PC-3 (cell line): ENCODE measurements at regions of chr5 and their contacts with region 1.

Region 1: DNA sequence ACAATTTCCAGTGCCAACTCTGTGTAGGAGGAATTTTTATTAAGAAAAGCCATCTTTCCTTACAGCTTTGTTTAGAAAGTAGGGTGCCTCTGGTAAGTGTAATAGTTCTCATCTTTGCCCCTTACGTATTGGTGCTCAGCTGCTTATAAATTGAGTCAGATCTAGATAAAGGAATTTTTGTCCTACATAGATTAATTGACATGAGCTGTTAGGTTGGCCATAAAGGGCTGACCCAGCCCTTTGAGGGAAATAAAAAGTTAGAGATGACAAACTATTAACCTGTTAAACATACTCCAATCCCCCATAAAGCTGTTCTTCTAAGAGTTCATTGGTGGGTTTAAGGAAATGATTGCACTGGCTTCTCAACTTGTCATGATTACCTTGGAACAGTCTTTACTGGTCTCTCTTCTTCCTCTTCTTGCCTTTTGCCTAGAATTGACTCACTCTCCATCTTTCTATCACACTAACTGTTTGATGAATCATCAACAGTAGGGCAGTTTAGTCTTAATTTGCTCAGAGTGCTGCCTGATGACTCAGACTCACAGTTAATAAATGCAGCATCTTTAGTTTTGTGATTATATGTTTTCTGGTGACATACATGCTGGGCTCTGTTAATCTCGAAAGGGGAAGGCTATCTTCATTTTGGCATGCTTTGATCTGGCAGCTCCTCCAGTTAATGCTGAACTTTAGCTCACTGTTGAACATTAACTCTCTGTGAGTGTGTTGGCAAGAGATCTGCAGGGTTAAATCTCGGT is 51.7 kb downstream of the ARHGAP26 start:
- DNase-seq: peak; percentile 91
- ATAC-seq: peak; percentile 71
- H3K4me3 ChIP-seq: peak overlapping the region; percentile 34; the same call in 1 of the 2 replicates
- H3K27ac ChIP-seq: peak overlapping the region; percentile 97
- H3K4me1 ChIP-seq: peaks cover 98% of the 10 kb centered on the region
- H3K27me3 ChIP-seq: no peaks in the 10 kb centered on the region
- CTCF ChIP-seq: no peak

Region 2: DNA sequence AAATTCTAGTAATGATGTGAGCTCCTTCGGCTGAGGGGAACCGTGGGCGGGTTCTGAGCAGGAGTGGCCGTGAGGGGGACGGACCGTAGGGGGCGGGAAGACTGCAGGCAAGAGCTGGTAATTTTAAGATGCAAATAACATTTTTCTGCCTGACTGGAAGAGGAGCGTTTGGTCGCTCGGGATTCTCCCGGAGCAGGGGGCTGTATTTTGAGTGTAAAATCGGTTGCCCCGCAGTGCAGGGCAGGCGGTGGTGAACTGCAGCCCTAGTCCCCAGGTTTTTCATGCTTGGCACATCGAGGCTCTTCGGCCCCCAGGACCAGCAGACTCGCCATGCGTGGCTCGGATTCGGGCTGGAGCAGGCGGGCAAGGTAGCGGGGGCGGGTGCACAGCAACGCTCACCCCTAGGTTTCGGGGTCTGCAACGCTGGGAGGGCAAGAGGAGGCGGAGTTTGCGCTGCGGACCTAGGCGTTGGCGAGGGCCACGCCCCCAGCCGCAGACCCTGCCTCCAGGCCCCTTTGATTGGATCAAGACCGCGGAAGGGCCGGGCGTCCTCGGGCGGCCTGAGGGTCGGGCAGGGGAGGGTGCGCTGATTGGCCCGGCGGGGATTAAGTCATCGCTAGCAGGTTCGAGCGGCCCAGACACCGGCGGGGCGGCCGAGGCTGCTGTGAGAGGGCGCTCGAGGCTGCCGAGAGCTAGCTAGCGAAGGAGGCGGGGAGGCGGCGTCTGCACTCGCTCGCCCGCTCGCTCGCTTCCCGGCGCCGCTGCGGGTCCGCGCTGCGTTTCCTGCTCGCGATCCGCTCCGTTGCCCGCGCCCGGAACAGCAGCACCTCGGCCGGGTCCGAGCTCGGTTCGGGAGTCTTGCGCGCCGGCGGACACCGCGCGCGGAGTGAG is 51.9 kb before region 1 on chr5 and contains the start of gene ARHGAP26:
- CTCF ChIA-PET with region 1: no interaction called
- POLR2A ChIA-PET with region 1: interaction called, 4 read pairs
- intact Hi-C with region 1: loop called (anchors 5 kb)
- DNase-seq: peak; percentile 92
- ATAC-seq: peak; percentile 94
- H3K4me3 ChIP-seq: peak within 1 kb of the TSS; percentile 97
- H3K27ac ChIP-seq: peak within 1 kb of the TSS; percentile 29
- H3K4me1 ChIP-seq: peaks cover 19% of the 10 kb centered on the region
- H3K27me3 ChIP-seq: no peaks in the 10 kb centered on the region
- CTCF ChIP-seq: no peak
- total RNA-seq, gene ARHGAP26: 6.2 and 11.7 TPM in 2 replicates

Region 3: DNA sequence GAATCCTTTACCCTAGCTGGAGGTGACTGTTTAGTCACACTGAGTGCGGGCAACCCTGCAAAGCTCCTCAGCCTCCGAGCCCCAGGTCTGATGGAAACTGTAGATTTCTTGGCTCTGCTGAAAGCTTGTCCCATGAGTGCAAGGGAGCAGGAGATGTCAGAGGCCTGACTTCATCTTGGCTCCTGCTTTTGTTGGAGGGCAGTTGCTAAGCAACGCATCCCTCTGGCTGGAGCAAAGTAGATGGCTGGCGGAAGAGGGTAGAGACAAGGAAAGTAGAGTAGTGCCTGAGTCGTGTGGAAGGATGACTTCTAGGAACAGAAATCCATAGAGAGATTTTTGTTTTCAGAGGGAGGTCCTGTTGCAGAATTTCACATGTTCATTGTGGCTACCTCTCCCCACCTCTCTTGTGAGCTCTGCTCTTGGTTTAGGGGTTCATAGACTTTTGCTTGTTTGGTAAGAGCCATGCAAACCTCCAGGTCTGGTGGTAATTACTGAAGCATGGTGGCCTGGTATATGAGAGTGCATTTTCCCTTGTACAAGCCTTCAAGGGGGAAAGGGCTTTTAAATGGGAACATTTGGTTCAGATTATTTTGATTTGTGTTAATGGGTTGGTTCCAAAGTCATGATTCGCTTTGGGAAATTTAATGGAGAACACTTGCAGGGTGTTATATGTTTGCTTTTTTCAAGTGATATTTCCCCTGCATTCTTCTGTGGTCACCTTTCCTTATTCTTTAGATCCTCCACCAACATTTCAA is 19.8 kb after region 1 on chr5:
- CTCF ChIA-PET with region 1: no interaction called
- POLR2A ChIA-PET with region 1: interaction called, 4 read pairs
- intact Hi-C with region 1: loop called (anchors 2 kb)
- DNase-seq: no peak
- ATAC-seq: no peak
- H3K4me3 ChIP-seq: no peak overlapping the region
- H3K27ac ChIP-seq: no peak overlapping the region
- H3K4me1 ChIP-seq: peaks cover 45% of the 10 kb centered on the region
- H3K27me3 ChIP-seq: no peaks in the 10 kb centered on the region
- CTCF ChIP-seq: no peak

Region 4: DNA sequence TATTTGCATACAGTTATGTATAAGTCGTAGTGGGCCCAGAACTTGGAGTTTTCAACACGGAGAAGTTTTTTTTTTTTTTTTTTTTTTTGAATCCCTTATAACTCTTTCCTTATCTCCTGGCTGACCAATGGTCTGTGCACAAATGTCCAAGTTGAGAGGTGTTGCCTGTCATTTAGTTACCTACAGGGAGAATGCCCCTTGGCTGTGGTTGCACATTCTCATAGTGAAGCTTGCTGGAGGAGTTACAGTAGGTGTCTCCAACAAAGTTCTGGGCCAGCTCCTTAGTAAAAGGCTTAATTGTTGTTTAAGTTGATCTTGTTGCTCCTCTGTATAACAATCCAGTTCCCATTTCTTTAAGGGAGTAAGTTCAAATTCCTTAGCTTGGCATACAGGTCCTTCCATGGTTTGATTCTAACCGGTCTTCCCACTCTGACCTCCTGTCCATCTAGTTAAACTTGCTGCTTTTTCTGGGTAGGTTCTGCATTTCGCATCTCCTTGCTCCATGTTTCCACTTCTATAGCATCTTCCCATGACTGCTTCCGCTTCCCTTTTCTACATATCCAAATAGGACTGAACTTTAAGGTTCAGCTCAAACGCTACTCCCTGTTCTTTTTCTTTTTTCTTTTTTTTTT is 43.6 kb after region 1 on chr5:
- CTCF ChIA-PET with region 1: interaction called, 6 read pairs
- POLR2A ChIA-PET with region 1: no interaction called
- intact Hi-C with region 1: loop called (anchors 2 kb)
- DNase-seq: no peak
- ATAC-seq: no peak
- H3K4me3 ChIP-seq: no peak overlapping the region
- H3K27ac ChIP-seq: no peak overlapping the region
- H3K4me1 ChIP-seq: peaks cover 13% of the 10 kb centered on the region
- H3K27me3 ChIP-seq: no peaks in the 10 kb centered on the region
- CTCF ChIP-seq: no peak

Region 5: DNA sequence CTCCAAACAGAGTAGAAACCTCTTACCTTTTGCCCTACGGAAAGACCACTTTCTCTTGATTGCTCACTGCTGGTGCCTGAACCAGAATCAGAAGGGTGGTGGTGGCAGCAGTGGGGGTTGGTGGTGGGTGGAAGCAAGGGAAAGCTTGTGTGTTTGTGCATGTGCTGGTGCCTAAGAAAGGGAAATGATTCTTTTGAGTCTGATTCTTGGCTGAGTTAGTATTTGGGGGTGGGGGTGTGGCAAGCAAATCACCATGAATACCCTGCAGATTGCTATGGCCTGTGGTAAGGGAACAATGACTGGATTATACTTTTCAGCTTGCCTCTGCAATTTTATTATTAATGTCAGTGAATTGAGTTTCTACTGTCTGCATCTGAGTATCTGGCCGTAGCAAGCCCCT is 54.9 kb after region 1 on chr5:
- CTCF ChIA-PET with region 1: no interaction called
- POLR2A ChIA-PET with region 1: no interaction called
- intact Hi-C with region 1: no loop called
- DNase-seq: no peak
- ATAC-seq: no peak
- H3K4me3 ChIP-seq: no peak overlapping the region
- H3K27ac ChIP-seq: no peak overlapping the region
- H3K4me1 ChIP-seq: peaks cover 36% of the 10 kb centered on the region
- H3K27me3 ChIP-seq: no peaks in the 10 kb centered on the region
- CTCF ChIP-seq: no peak

Region 6: DNA sequence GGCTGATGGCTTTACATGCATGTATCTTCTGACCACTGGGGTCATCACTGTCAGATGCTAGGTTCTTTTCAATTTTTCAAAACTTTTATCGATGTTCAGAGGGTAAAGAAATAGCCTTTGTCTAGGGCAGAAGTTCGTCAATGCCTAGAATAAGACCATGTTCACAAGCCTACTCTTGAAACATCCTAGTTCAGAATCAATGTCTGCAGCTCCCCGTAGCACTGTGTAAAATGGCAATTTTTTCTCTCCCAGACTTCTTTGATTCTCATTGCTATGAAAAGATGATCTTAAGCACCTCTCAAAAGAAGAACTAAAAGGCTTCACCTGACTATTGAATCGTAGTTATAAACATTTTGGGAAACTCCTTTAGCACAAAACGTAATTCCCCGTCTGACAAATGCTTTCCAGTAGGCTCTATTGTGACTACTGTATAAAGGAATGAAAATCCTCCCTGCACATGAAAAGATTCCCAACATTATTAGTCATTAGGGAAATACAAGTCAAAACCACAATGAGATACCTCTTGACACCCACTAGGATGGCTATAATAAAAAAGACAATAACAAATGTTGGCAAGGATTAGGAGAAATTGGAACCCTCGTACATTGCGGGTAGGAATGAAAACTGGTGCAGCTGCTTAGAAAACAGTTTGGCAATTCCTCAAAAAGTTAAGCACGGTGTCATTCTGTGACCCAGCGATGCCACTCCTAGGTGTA is 211.8 kb after region 1 on chr5:
- CTCF ChIA-PET with region 1: no interaction called
- POLR2A ChIA-PET with region 1: no interaction called
- intact Hi-C with region 1: no loop called
- DNase-seq: peak; percentile 90
- ATAC-seq: peak; percentile 85
- H3K4me3 ChIP-seq: no peak overlapping the region
- H3K27ac ChIP-seq: peak overlapping the region; percentile 89
- H3K4me1 ChIP-seq: peaks cover 39% of the 10 kb centered on the region
- H3K27me3 ChIP-seq: no peaks in the 10 kb centered on the region
- CTCF ChIP-seq: no peak